Dendritic cell treated with granulocyte-macrophage colony-stimulating factor and Interleukin-4, amounts not matched to agents 40 ng/mL and 50 ng/mL, for 4 days (primary cell): ENCODE measurements at regions of chr3 and their contacts with region 1.

Region 1: GRCh38 chr3:36494461-36495109 is 114.3 kb downstream of the STAC start:
- H3K4me3 Mint-ChIP-seq: no peak overlapping the region
- H3K27ac Mint-ChIP-seq: peak overlapping the region; percentile 77
- H3K4me1 Mint-ChIP-seq: peaks cover 67% of the 10 kb centered on the region
- H3K27me3 Mint-ChIP-seq: no peaks in the 10 kb centered on the region

Region 2: DNA sequence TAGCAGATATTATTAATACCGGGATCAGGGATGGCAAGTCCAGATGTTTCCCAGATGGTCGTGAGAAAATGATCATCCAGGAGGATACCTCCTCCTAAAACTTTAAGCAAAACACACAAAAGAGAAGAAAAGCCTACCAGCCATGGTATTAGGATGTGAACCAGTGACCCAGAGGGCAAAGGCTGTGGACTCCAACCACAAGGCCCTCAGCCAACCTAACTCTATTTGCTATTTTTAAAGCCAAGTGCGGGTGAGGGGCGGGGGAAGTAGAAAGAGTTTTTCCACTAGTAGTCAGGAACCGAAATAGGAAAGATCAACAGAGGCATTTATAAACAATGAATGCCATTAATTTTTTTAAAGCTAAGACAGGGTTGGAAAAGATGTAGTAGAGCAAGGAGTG is 36.9 kb before region 1 on chr3:
- intact Hi-C with region 1: loop called (anchors 5 kb)
- H3K4me3 Mint-ChIP-seq: no peak overlapping the region
- H3K27ac Mint-ChIP-seq: no peak overlapping the region
- H3K4me1 Mint-ChIP-seq: peaks cover 39% of the 10 kb centered on the region
- H3K27me3 Mint-ChIP-seq: no peaks in the 10 kb centered on the region

Region 3: DNA sequence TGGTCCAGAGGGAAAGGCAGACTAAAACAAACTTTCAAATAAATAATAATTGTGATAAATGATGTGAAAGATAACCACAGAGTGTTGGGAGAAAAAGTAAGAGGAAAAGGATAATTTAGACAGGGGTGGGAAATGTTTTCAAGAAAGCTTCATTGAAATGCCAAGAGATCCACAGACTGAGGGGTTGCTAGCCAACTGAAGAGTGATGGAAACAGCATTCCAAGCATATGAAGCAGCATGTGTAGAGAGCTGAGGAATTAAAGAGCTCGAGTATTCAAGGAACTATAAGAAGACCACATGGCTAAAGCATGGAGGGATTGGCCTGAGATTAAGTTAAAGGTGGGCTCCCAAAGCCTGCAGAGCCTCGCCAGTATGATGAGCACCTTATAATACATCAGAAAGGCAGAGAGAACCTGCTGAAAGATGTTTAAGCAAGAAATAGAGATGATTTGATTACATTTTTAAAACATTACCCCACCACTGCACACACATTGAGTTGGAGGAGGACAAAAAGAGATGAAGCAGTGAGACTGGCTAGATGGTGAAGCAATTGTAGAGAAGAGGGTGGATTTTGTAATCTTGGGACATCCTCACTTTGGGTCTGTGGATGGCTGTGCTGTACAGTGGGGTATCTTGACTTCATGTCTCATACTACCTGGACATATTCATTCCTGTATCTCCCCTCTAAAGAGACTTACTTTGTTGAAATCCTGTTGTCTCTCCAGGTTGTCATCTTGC is 13.5 kb before region 1 on chr3:
- intact Hi-C with region 1: no loop called
- H3K4me3 Mint-ChIP-seq: no peak overlapping the region
- H3K27ac Mint-ChIP-seq: peak overlapping the region; percentile 74
- H3K4me1 Mint-ChIP-seq: peaks cover 66% of the 10 kb centered on the region
- H3K27me3 Mint-ChIP-seq: no peaks in the 10 kb centered on the region